Calu3 (cell line): ENCODE measurements at regions of chr11 and their contacts with region 1.

Region 1: GRCh38 chr11:130924770-130925169 is 8.5 kb upstream of the SNX19 start:
- DNase-seq: no peak
- H3K4me3 Mint-ChIP-seq: no peak overlapping the region
- H3K27ac Mint-ChIP-seq: no peak overlapping the region
- H3K4me1 Mint-ChIP-seq: no peaks in the 10 kb centered on the region
- H3K27me3 Mint-ChIP-seq: peaks cover 21% of the 10 kb centered on the region
- CTCF ChIP-seq: no peak

Region 2: GRCh38 chr11:130847517-130847916 is 77.3 kb before region 1 on chr11:
- CTCF ChIA-PET with region 1: no interaction called
- intact Hi-C with region 1: no loop called
- DNase-seq: peak; percentile 36
- H3K4me3 Mint-ChIP-seq: peak overlapping the region; percentile 52
- H3K27ac Mint-ChIP-seq: peak overlapping the region; percentile 61
- H3K4me1 Mint-ChIP-seq: peaks cover 16% of the 10 kb centered on the region
- H3K27me3 Mint-ChIP-seq: no peaks in the 10 kb centered on the region
- CTCF ChIP-seq: no peak

Region 3: GRCh38 chr11:130904380-130904779 is 20.4 kb before region 1 on chr11:
- CTCF ChIA-PET with region 1: no interaction called
- intact Hi-C with region 1: no loop called
- DNase-seq: no peak
- H3K4me3 Mint-ChIP-seq: no peak overlapping the region
- H3K27ac Mint-ChIP-seq: no peak overlapping the region
- H3K4me1 Mint-ChIP-seq: peaks cover 3% of the 10 kb centered on the region
- H3K27me3 Mint-ChIP-seq: no peaks in the 10 kb centered on the region
- CTCF ChIP-seq: no peak

Region 4: DNA sequence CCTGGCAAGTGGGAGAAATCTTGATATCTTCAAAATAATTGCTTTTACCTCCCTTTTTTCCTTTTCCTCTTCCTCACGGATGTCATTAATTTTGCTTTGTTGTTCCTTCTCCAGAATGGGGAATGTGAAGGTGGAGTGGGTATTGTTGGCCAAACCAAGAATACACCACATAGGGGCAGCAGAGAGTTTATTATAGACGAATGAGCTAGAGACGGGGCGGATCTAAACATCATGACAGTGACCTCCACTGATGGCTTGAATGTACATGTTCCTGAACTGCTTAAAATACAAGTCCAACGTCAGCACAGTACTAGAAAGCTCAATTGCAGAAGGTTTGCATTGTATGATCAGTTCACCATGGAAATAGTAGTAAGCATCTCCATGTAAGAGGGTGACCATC is 113.8 kb after region 1 on chr11:
- CTCF ChIA-PET with region 1: no interaction called
- intact Hi-C with region 1: loop called (anchors 10 kb)
- DNase-seq: no peak
- H3K4me3 Mint-ChIP-seq: no peak overlapping the region
- H3K27ac Mint-ChIP-seq: no peak overlapping the region
- H3K4me1 Mint-ChIP-seq: peaks cover 7% of the 10 kb centered on the region
- H3K27me3 Mint-ChIP-seq: no peaks in the 10 kb centered on the region
- CTCF ChIP-seq: no peak